ENCODE measurements at regions of chr2 and their contacts with region 1.

Region 1: GRCh38 chr2:19769513-19769912 is 132.3 kb downstream of the TTC32 start:
- DNase-seq: no peak
- H3K4me3 ChIP-seq: no peak overlapping the region
- H3K27ac ChIP-seq: no peak overlapping the region
- H3K4me1 ChIP-seq: peaks cover 7% of the 10 kb centered on the region
- H3K27me3 ChIP-seq: no peaks in the 10 kb centered on the region
- CTCF ChIP-seq: peak; percentile 72

Region 2: GRCh38 chr2:19109518-19109917 is 660.0 kb before region 1 on chr2:
- CTCF ChIA-PET with region 1: interaction called, 13 read pairs
- POLR2A ChIA-PET with region 1: no interaction called
- intact Hi-C with region 1: no loop called
- DNase-seq: no peak
- H3K4me3 ChIP-seq: no peak overlapping the region
- H3K27ac ChIP-seq: no peak overlapping the region
- H3K4me1 ChIP-seq: peaks cover 10% of the 10 kb centered on the region
- H3K27me3 ChIP-seq: no peaks in the 10 kb centered on the region
- CTCF ChIP-seq: no peak

Region 3: GRCh38 chr2:19667085-19667484 is 102.4 kb before region 1 on chr2:
- CTCF ChIA-PET with region 1: interaction called, 10 read pairs
- POLR2A ChIA-PET with region 1: no interaction called
- intact Hi-C with region 1: no loop called
- DNase-seq: no peak
- H3K4me3 ChIP-seq: no peak overlapping the region
- H3K27ac ChIP-seq: 0 out of 2 replicates have a peak overlapping the region, but pooled peaks have one; percentile 8
- H3K4me1 ChIP-seq: peaks cover 10% of the 10 kb centered on the region
- H3K27me3 ChIP-seq: no peaks in the 10 kb centered on the region
- CTCF ChIP-seq: peak; percentile 63; the same call in 1 of the 2 replicates